Prostate gland (tissue), 2 donors: ENCODE measurements at regions of chr15 and their contacts with region 1.

Region 1: GRCh38 chr15:64681424-64682024 is 93.9 kb downstream of the RBPMS2 start:
- DNase-seq: peak; percentile 60
- H3K4me3 ChIP-seq: no peak overlapping the region
- H3K27ac ChIP-seq: no peak overlapping the region
- H3K4me1 ChIP-seq: no peaks in the 10 kb centered on the region
- H3K27me3 ChIP-seq: no peaks in the 10 kb centered on the region
- CTCF ChIP-seq: peak; percentile 46 to 93 (median 83)
- POLR2A ChIP-seq: no peak

Region 2: DNA sequence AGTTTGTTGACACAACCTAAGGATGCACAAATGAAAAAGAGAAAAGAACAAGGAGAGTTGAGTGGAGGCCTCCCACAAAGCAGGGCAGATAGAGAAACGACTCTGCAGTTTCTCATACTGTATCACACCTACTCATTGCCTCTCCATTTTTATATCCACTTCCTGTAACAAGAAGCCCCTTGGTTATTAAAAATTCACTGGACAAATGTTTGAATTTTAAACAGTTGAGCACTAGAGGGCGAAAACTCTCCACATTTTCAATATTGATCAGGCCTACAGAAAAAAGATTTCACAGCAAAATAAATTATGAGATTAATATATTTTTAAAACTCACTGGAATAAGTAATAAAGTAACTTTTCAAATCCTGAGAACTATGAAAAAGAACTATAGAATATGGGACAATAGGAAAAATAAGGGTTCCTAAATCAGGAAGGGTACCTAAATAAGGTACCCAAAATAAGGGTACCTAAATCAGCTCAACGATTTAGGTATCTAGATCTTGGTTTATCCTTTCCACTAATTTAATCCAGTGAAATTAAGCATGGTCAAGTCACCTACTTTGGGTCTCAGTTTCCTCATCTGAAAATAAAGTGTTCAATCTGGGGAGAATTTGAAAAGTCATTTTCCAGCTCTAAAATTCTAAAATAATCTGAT is 471.7 kb before region 1 on chr15:
- intact Hi-C with region 1: loop called (anchors 5 kb)
- DNase-seq: no peak
- H3K4me3 ChIP-seq: no peak overlapping the region
- H3K27ac ChIP-seq: no peak overlapping the region
- H3K4me1 ChIP-seq: no peaks in the 10 kb centered on the region
- H3K27me3 ChIP-seq: no peaks in the 10 kb centered on the region
- CTCF ChIP-seq: peak in 3 of 4 experiments; percentile 32 to 57 (median 55)
- POLR2A ChIP-seq: no peak

Region 3: GRCh38 chr15:64430000-64430735 is 251.4 kb before region 1 on chr15:
- intact Hi-C with region 1: loop called (anchors 5 kb)
- DNase-seq: peak; percentile 8
- H3K4me3 ChIP-seq: no peak overlapping the region
- H3K27ac ChIP-seq: peak overlapping the region in 1 of 2 donors; percentile 35
- H3K4me1 ChIP-seq: no peaks in the 10 kb centered on the region
- H3K27me3 ChIP-seq: no peaks in the 10 kb centered on the region
- CTCF ChIP-seq: no peak
- POLR2A ChIP-seq: no peak

Region 4: GRCh38 chr15:64731012-64731806 is 49.7 kb after region 1 on chr15:
- intact Hi-C with region 1: loop called (anchors 1 kb)
- DNase-seq: peak; percentile 89
- H3K4me3 ChIP-seq: no peak overlapping the region
- H3K27ac ChIP-seq: no peak overlapping the region
- H3K4me1 ChIP-seq: no peaks in the 10 kb centered on the region
- H3K27me3 ChIP-seq: no peaks in the 10 kb centered on the region
- CTCF ChIP-seq: peak; percentile 55 to 94 (median 90)
- POLR2A ChIP-seq: peak; percentile 5

Region 5: DNA sequence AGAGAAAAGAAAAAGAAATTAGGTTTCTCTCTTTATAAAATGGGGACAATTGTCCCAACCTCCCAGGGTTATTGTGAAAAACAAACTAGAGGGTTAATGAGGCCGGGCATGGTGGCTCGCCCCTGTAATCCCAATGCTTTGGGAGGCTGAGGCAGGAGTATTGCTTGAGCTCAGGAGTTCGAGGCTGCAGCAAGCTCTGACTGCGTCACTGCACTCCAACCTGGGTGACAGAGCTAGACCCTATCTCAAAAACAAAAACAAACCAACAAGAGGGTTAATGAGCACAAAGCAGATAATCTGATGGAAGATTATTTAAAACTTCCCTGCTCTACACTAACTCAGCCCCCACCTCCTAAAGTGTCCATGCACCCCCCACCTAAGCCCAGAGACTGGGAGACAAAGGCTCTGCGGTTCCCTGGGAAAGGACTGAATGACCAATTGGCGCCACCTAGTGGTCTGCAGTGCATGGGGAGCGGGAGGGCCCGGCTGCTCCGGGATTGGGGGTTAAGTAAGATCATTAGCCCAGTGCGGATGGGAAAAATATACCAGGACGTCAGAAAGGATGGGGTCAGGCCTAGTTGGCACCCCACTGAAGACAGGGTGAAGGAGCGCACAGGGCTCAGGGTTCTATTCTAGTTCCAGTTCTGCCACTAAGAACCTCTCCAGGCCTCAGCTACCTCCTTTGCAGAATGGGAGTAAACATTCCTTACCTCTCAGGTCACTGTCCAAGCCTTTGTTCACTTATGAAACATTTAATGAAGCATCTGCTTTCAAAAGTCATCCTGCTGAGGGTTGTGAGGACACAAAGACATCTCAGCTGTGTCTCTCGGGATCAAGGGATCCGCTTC is 128.3 kb after region 1 on chr15:
- intact Hi-C with region 1: loop called (anchors 5 kb)
- DNase-seq: peak; percentile 63
- H3K4me3 ChIP-seq: no peak overlapping the region
- H3K27ac ChIP-seq: no peak overlapping the region
- H3K4me1 ChIP-seq: no peaks in the 10 kb centered on the region
- H3K27me3 ChIP-seq: no peaks in the 10 kb centered on the region
- CTCF ChIP-seq: peak; percentile 79 to 94 (median 86)
- POLR2A ChIP-seq: no peak